Naive thymus-derived CD4-positive, alpha-beta T cell (primary cell): ENCODE measurements at regions of chr1 and their contacts with region 1.

Region 1: DNA sequence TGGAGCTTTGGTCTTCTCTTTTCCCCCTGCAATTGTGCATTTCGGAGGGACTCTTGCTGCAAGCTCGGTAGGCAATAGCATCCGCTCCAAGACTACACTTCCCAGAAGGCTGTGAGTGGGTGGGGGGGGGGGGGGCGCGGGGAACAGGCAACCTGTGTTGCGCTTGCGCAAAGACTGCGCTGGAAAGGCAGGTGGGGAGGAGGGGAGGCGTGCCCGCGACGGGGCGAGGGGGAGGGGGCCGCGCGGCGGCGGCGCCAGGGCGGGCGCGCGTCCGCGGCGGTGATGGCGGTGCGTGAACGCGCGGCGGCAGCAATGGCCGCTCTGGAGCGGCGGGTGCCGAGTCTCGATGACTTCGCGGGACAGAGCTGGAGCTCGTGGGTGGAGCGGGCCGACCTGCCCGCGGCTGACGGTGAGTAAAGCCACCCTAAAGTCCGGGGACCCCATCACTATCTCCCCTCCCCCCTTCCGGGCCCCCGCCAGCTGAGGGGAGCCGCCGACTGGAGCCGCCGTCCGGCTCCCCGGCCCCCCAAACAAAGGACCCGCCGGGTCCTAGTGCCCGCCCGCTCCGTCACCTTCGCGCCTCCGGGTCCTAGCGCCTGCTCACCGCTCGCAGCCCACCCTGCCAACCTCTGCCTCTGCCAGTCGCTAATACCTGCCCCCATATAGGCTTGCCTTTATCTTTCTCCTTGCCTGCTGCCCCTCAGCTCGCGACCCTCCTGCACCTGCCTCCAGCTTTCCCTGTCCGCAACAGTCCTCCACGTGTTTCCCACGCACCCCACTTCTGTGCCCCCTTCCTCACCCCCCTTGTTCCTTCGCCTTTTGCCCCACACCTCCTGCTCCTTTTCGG is at the start of gene ATXN7L2:
- DNase-seq: peak; percentile 89 to 95 (median 93)
- ATAC-seq: peak; percentile 91
- H3K4me3 ChIP-seq: peak within 1 kb of the TSS; percentile 98
- H3K4me3 Mint-ChIP-seq: peak within 1 kb of the TSS; percentile 93 to 99 (median 96)
- H3K27ac ChIP-seq: peak within 1 kb of the TSS; percentile 88
- H3K27ac Mint-ChIP-seq: peak within 1 kb of the TSS; percentile 83 to 97 (median 92)
- H3K4me1 ChIP-seq: peaks cover 9 to 14% of the 10 kb centered on the region in 2 donors
- H3K4me1 Mint-ChIP-seq: peaks cover 27 to 44% (median 35%) of the 10 kb centered on the region in 7 donors
- H3K27me3 ChIP-seq: no peaks in the 10 kb centered on the region
- H3K27me3 Mint-ChIP-seq: peaks cover 0 to 23% (median under 1%) of the 10 kb centered on the region in 5 donors
- total RNA-seq, gene ATXN7L2: 10.5 to 12.8 (median 11.7) TPM

Region 2: GRCh38 chr1:108746372-108747205 is 737.3 kb before region 1 on chr1 and contains the start of gene STXBP3:
- CTCF ChIA-PET with region 1: no interaction called
- POLR2A ChIA-PET with region 1: no interaction called
- intact Hi-C with region 1: loop called in 1 of 2 experiments (anchors 10 kb)
- DNase-seq: peak; percentile 98 to 100 (median 99)
- ATAC-seq: peak; percentile 97
- H3K4me3 ChIP-seq: peak within 1 kb of the TSS; percentile 76
- H3K4me3 Mint-ChIP-seq: peak within 1 kb of the TSS; percentile 90 to 100 (median 97)
- H3K27ac ChIP-seq: peak within 1 kb of the TSS; percentile 98
- H3K27ac Mint-ChIP-seq: peak within 1 kb of the TSS; percentile 93 to 100 (median 98)
- H3K4me1 ChIP-seq: peaks cover 3 to 6% of the 10 kb centered on the region in 2 donors
- H3K4me1 Mint-ChIP-seq: peaks cover 26 to 47% (median 41%) of the 10 kb centered on the region in 7 donors
- H3K27me3 ChIP-seq: no peaks in the 10 kb centered on the region
- H3K27me3 Mint-ChIP-seq: peaks cover 0 to 5% (median 0%) of the 10 kb centered on the region in 5 donors
- total RNA-seq, gene STXBP3: 46.8 to 75.2 (median 54.0) TPM

Region 3: GRCh38 chr1:109099938-109100773 is 383.7 kb before region 1 on chr1:
- CTCF ChIA-PET with region 1: interaction called, 3 read pairs
- POLR2A ChIA-PET with region 1: interaction called, 4 read pairs
- intact Hi-C with region 1: loop called in 1 of 2 experiments (anchors 1 kb)
- DNase-seq: peak; percentile 90 to 98 (median 97)
- ATAC-seq: peak; percentile 98
- H3K4me3 ChIP-seq: peak overlapping the region; percentile 80
- H3K4me3 Mint-ChIP-seq: peak overlapping the region; percentile 93 to 99 (median 98)
- H3K27ac ChIP-seq: peak overlapping the region; percentile 88
- H3K27ac Mint-ChIP-seq: peak overlapping the region; percentile 92 to 99 (median 96)
- H3K4me1 ChIP-seq: peaks cover 0 to 5% of the 10 kb centered on the region in 2 donors
- H3K4me1 Mint-ChIP-seq: peaks cover 5 to 22% (median 13%) of the 10 kb centered on the region in 7 donors
- H3K27me3 ChIP-seq: no peaks in the 10 kb centered on the region
- H3K27me3 Mint-ChIP-seq: peaks cover 0 to 2% (median 0%) of the 10 kb centered on the region in 5 donors

Region 4: GRCh38 chr1:109282952-109283747 is 200.7 kb before region 1 on chr1 and contains the start of gene PSRC1:
- CTCF ChIA-PET with region 1: interaction called, 3 read pairs
- POLR2A ChIA-PET with region 1: interaction called, 4 read pairs
- intact Hi-C with region 1: loop called (anchors 1 kb)
- DNase-seq: peak; percentile 78 to 94 (median 88)
- ATAC-seq: peak; percentile 98
- H3K4me3 ChIP-seq: peak within 1 kb of the TSS; percentile 92
- H3K4me3 Mint-ChIP-seq: peak within 1 kb of the TSS; percentile 89 to 99 (median 96)
- H3K27ac ChIP-seq: peak within 1 kb of the TSS; percentile 65
- H3K27ac Mint-ChIP-seq: peak within 1 kb of the TSS; percentile 55 to 94 (median 88)
- H3K4me1 ChIP-seq: peaks cover 8 to 11% of the 10 kb centered on the region in 2 donors
- H3K4me1 Mint-ChIP-seq: peaks cover 6 to 29% (median 14%) of the 10 kb centered on the region in 7 donors
- H3K27me3 ChIP-seq: no peaks in the 10 kb centered on the region
- H3K27me3 Mint-ChIP-seq: peaks cover 0 to 8% (median 0%) of the 10 kb centered on the region in 5 donors
- total RNA-seq, gene PSRC1: 0.38 to 16.1 (median 1.3) TPM in 4 of 5 experiments, not detected in the other

Region 5: DNA sequence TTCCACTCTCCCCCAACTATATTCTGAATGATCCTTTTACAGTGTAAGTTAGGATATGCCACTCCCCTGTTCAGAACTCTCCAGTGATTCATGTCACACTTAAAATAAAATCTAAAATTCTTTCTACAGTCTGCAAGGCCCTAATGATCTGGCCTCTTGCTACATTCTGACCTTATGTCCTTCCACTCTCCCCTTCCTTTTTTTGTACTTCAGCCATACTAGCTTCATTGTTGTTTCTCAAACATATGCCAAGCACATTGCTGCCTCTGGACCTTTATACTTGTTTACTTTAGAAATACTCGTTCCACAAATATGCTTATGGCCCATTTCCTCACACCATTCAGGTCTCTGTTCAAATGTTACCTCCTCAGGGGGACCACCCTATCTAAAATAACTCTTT is 42.8 kb before region 1 on chr1:
- CTCF ChIA-PET with region 1: no interaction called
- POLR2A ChIA-PET with region 1: no interaction called
- intact Hi-C with region 1: no loop called
- DNase-seq: no peak
- ATAC-seq: no peak
- H3K4me3 ChIP-seq: no peak overlapping the region
- H3K4me3 Mint-ChIP-seq: no peak overlapping the region
- H3K27ac ChIP-seq: no peak overlapping the region
- H3K27ac Mint-ChIP-seq: no peak overlapping the region
- H3K4me1 ChIP-seq: no peaks in the 10 kb centered on the region
- H3K4me1 Mint-ChIP-seq: no peaks in the 10 kb centered on the region
- H3K27me3 ChIP-seq: peaks cover 3 to 5% of the 10 kb centered on the region in 2 donors
- H3K27me3 Mint-ChIP-seq: peaks cover 4 to 12% (median 8%) of the 10 kb centered on the region in 5 donors

Region 6: GRCh38 chr1:109499661-109500536 is 16.0 kb after region 1 on chr1:
- CTCF ChIA-PET with region 1: interaction called, 417 read pairs
- POLR2A ChIA-PET with region 1: interaction called, 478 read pairs
- intact Hi-C with region 1: loop called in 1 of 2 experiments (anchors 2 kb)
- DNase-seq: peak in 8 of 9 donors; percentile 50 to 69 (median 62)
- ATAC-seq: peak; percentile 28
- H3K4me3 ChIP-seq: peak overlapping the region; percentile 9
- H3K4me3 Mint-ChIP-seq: peak overlapping the region; percentile 28 to 98 (median 89)
- H3K27ac ChIP-seq: peak overlapping the region; percentile 95
- H3K27ac Mint-ChIP-seq: peak overlapping the region; percentile 87 to 99 (median 98)
- H3K4me1 ChIP-seq: peaks cover 72 to 84% of the 10 kb centered on the region in 2 donors
- H3K4me1 Mint-ChIP-seq: peaks cover 68 to 99% (median 93%) of the 10 kb centered on the region in 7 donors
- H3K27me3 ChIP-seq: no peaks in the 10 kb centered on the region
- H3K27me3 Mint-ChIP-seq: no peaks in the 10 kb centered on the region

Region 7: GRCh38 chr1:109620841-109621286 is 137.0 kb after region 1 on chr1:
- CTCF ChIA-PET with region 1: no interaction called
- POLR2A ChIA-PET with region 1: interaction called, 4 read pairs
- intact Hi-C with region 1: loop called (anchors 2 kb)
- DNase-seq: peak; percentile 92 to 98 (median 95)
- ATAC-seq: peak; percentile 90
- H3K4me3 ChIP-seq: peak overlapping the region; percentile 78
- H3K4me3 Mint-ChIP-seq: peak overlapping the region; percentile 90 to 98 (median 94)
- H3K27ac ChIP-seq: peak overlapping the region; percentile 90
- H3K27ac Mint-ChIP-seq: peak overlapping the region; percentile 92 to 98 (median 96)
- H3K4me1 ChIP-seq: peaks cover 14 to 43% of the 10 kb centered on the region in 2 donors
- H3K4me1 Mint-ChIP-seq: peaks cover 52 to 79% (median 68%) of the 10 kb centered on the region in 7 donors
- H3K27me3 ChIP-seq: no peaks in the 10 kb centered on the region
- H3K27me3 Mint-ChIP-seq: no peaks in the 10 kb centered on the region

Region 8: DNA sequence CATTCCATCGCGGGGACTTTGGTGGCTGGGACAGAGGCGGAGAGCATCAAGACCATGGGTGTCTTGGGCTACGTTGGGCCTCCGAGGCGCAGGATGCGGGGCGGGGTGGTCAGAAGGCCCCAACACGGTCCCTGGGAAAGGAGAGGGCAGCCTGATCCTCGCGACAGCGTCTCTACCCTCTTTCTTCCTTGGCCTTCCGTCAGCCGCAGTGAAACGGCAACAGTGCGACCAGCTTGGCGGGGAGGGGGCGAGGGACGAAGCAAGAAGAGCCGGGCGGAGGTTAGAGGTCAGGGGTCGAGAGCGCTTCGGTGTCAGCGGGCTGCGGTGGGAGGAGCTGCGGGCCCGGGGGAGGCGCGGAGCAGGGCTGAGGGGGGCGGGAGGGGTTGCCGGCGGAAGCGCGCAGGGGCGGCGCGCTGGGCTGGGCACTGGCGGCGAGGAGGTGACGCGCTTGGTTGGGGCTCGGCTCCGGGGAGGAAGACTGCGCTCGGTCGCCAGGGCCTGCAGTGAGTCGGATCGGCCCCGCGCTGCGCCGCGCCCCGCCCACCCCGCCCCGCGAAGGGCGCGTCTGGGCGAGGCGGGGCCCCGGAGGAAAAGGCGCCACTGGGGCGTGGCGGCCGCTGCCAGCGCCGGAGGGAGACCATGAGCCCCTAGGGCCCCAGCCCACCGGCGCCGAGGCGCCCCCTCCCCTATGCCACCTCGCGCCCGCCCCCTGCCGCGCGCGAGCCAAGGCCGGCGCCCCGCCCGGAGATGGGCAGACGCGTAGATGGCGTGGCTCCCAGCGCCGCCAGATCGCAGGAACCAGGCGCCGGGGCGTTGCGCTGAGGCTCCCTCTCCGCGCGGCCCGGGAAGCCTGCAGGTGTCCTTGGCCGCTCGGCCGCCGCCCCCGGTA is 726.1 kb after region 1 on chr1 and contains the start of gene KCNC4:
- CTCF ChIA-PET with region 1: no interaction called
- POLR2A ChIA-PET with region 1: interaction called, 4 read pairs
- intact Hi-C with region 1: loop called (anchors 1 to 10 kb)
- DNase-seq: peak; percentile 80 to 93 (median 91)
- ATAC-seq: peak; percentile 93
- H3K4me3 ChIP-seq: peak within 1 kb of the TSS; percentile 72
- H3K4me3 Mint-ChIP-seq: peak within 1 kb of the TSS; percentile 86 to 94 (median 88)
- H3K27ac ChIP-seq: peak within 1 kb of the TSS; percentile 89
- H3K27ac Mint-ChIP-seq: peak within 1 kb of the TSS; percentile 88 to 98 (median 95)
- H3K4me1 ChIP-seq: peaks cover 7 to 20% of the 10 kb centered on the region in 2 donors
- H3K4me1 Mint-ChIP-seq: peaks cover 31 to 61% (median 42%) of the 10 kb centered on the region in 7 donors
- H3K27me3 ChIP-seq: no peaks in the 10 kb centered on the region
- H3K27me3 Mint-ChIP-seq: peaks cover 0 to 16% (median 0%) of the 10 kb centered on the region in 5 donors
- total RNA-seq, gene KCNC4: 5.8 to 18.2 (median 12.4) TPM